Adrenal gland (tissue), 19 donors: ENCODE measurements at regions of chr6 and their contacts with region 1.

Region 1: DNA sequence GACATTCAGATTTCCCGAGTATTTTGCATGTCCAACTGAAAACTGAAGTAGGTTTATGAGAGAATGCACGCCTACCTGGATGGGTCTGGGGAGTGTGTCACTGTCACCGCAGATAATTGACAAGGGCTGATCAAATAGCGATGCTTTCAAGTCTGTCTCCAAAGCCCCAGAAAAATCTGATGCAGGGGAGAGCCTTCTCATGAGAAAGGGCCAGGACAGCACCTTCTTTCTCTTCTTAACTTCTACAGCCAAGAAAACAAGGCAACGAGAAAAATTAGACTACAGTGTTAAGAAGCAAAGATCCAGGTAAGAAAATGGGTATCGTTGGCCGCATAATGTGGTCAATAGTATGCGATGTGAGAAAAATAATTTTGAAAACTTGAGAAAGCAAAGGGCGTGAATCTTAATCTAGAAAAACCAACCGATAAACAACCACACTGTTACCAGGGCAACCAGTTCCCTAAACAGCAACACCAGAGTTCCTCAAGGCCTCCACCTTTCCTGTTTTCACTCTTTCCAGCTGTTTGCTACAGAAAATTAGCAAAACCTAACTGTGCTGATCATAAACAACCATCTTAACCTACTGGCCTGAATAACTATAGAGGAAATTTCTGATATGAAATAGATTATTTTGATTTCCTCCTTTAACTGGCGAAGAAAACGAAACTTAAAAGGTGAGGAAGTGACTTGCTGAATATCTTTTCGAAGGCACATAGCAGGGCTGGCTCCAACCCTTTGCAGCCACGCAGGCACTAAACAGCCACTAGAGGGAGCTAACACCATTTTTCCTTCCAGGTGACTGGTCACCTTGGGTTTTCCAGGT is 2.6 kb downstream of the TAGAP start:
- DNase-seq: peak; percentile 67 to 87 (median 73)
- H3K4me3 ChIP-seq: peak overlapping the region in 1 of 4 donors; percentile 44
- H3K27ac ChIP-seq: peak overlapping the region in 1 of 5 donors; percentile 33
- H3K4me1 ChIP-seq: peaks cover 0 to 6% of the 10 kb centered on the region in 2 donors
- H3K27me3 ChIP-seq: no peaks in the 10 kb centered on the region
- CTCF ChIP-seq: peak; percentile 84 to 96 (median 88)
- POLR2A ChIP-seq: no peak

Region 2: DNA sequence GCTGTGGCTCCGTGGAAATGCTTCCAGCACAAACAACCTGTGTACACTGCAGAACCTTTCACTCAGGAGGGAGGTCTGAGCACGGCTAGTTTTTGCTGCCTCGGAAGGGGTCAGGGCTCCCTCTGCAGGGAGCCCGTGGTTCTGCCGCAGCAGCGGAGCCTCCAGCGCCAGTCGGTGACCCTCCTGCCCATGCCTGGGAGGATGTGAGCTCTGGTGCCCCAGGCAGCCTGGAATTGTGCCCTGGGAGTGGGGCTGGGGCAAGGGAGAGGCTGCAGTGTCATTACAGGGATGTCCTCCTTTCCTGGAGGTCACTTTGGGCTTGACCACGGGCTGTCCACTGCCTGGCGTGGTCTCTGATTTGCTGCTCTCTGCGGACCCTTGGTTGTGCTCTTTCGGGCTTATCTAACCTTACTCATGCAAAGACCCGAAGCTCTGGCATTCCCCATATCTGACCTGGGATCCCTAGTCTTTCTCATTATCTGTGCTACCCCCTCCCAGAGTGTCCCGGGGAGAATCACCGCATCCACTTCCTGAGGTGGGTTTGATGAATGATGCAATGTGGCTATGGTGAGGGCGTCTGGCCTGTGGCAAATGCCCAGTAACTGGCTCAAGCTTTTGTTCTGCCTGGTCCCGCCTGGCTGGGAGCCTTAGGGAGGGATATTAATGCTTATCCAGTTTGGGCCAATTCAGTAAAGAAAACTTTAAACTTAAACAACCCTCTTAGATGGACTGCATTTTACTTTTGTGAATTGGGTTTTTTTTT is 62.1 kb after region 1 on chr6:
- intact Hi-C with region 1: loop called (anchors 2 to 5 kb)
- DNase-seq: peak; percentile 59 to 77 (median 74)
- H3K4me3 ChIP-seq: no peak overlapping the region
- H3K27ac ChIP-seq: no peak overlapping the region
- H3K4me1 ChIP-seq: peaks cover 0 to 3% of the 10 kb centered on the region in 2 donors
- H3K27me3 ChIP-seq: no peaks in the 10 kb centered on the region
- CTCF ChIP-seq: peak; percentile 74 to 90 (median 86)
- POLR2A ChIP-seq: no peak

Region 3: DNA sequence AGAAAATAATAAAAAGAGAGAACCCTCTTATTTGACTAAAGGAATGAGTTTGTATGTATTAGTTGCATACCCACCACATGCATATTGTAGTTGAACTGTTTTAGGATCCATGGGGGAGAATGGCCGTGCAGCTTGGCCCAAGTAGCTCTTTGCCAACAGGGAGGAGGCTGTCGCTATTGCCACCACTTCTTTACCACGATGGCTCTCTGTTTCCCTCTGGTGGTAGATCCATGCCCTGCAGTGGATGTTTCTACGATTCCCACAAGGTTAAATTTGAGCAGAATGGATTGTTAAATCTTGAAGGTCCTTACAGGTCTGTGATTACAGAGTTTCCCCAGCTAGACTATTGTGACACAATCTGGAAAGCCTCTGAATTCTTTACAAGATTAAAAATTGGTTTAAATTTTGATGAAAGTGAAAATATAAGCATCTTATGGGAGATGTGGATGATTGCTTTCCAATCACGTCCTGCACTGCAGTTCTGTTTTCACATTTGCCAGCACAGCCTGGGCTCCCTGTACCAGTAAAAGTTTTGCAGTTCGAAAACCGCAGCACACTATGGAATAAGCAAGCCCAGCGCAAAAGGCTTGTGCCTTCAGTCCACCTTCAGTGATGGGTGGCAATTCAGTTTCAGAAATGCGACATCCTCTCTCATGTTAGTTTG is 92.6 kb after region 1 on chr6:
- intact Hi-C with region 1: loop called (anchors 5 to 10 kb)
- DNase-seq: peak; percentile 75 to 93 (median 83)
- H3K4me3 ChIP-seq: no peak overlapping the region
- H3K27ac ChIP-seq: no peak overlapping the region
- H3K4me1 ChIP-seq: no peaks in the 10 kb centered on the region
- H3K27me3 ChIP-seq: no peaks in the 10 kb centered on the region
- CTCF ChIP-seq: peak; percentile 93 to 97 (median 96)
- POLR2A ChIP-seq: no peak

Region 4: GRCh38 chr6:159342145-159342544 is 299.9 kb after region 1 on chr6:
- intact Hi-C with region 1: no loop called
- DNase-seq: no peak
- H3K4me3 ChIP-seq: no peak overlapping the region
- H3K27ac ChIP-seq: no peak overlapping the region
- H3K4me1 ChIP-seq: no peaks in the 10 kb centered on the region
- H3K27me3 ChIP-seq: no peaks in the 10 kb centered on the region
- CTCF ChIP-seq: no peak
- POLR2A ChIP-seq: no peak

Region 5: DNA sequence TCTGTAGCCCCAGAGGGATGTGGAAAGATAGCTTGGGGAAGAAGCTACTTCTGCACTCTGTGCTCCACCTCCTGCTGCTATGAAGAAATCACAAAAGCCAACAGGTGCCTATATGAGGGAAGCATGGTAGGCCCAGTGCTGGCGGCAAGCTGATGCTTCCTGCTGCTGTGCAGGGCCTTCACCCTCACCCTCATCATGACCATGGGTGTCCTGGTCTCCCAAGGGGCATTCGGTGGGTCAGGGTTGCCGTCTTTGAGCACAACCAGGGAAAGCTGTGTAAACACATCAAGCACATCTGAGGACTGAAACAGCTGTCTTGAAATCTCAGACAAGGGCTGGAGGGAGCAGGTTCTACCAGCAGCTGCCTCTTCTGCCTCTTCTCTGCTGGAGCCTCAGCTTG is 311.0 kb after region 1 on chr6:
- intact Hi-C with region 1: no loop called
- DNase-seq: no peak
- H3K4me3 ChIP-seq: no peak overlapping the region
- H3K27ac ChIP-seq: no peak overlapping the region
- H3K4me1 ChIP-seq: no peaks in the 10 kb centered on the region
- H3K27me3 ChIP-seq: no peaks in the 10 kb centered on the region
- CTCF ChIP-seq: no peak
- POLR2A ChIP-seq: no peak

Region 6: GRCh38 chr6:159414711-159415110 is 372.5 kb after region 1 on chr6:
- intact Hi-C with region 1: no loop called
- DNase-seq: no peak
- H3K4me3 ChIP-seq: no peak overlapping the region
- H3K27ac ChIP-seq: no peak overlapping the region
- H3K4me1 ChIP-seq: no peaks in the 10 kb centered on the region
- H3K27me3 ChIP-seq: no peaks in the 10 kb centered on the region
- CTCF ChIP-seq: no peak
- POLR2A ChIP-seq: no peak